Endothelial cell of umbilical vein (primary cell): ENCODE measurements at regions of chr2 and their contacts with region 1.

Region 1: DNA sequence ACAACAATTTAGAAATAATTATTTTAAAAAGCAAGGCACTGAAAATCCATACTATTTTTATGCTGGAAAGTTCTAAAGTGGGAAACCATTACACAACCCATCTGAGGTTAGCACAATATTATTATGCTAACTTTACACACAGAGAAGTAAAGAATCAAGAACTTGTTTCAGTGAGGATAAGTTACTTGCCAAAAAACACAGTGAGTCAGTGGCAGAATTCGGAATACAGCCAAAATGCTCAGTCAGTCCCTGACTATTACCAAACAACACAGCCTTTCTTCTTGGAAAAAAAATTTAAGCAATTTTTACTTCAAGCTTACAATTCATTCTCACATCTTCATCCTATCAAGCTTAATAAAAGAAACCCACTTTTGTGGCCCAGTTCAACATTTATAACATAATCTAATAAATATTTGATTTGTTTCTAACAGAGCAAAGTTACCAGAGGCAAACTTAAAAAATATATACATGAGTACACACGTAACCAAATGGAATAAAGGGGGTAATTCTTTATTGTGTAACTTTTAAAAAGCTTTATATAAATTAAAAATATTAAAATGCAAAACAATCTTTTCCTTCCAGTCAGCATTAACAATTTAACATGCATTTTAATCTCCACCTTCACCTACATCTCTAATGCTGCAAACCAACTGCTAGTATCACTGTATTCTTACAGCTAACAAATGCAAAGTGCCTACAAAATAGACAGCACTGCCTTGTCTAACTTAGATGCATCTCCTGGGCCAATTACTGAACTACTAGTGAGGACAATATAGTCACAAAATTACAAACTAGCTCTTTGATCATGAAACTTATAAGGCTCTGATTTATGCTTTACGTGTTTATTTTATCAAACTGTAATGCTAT is 55.2 kb downstream of the CCDC88A start:
- DNase-seq: peak; percentile 98
- H3K4me3 ChIP-seq: no peak overlapping the region
- H3K27ac ChIP-seq: no peak overlapping the region
- H3K4me1 ChIP-seq: peaks cover 24% of the 10 kb centered on the region
- H3K27me3 ChIP-seq: no peaks in the 10 kb centered on the region
- CTCF ChIP-seq: no peak
- POLR2A ChIP-seq: no peak

Region 2: GRCh38 chr2:55384786-55385185 is 20.4 kb after region 1 on chr2:
- CTCF ChIA-PET with region 1: interaction called, 5 read pairs
- POLR2A ChIA-PET with region 1: no interaction called
- dilution Hi-C with region 1: no loop called
- intact Hi-C with region 1: loop called (anchors 1 kb)
- DNase-seq: no peak
- H3K4me3 ChIP-seq: no peak overlapping the region
- H3K27ac ChIP-seq: no peak overlapping the region
- H3K4me1 ChIP-seq: no peaks in the 10 kb centered on the region
- H3K27me3 ChIP-seq: no peaks in the 10 kb centered on the region
- CTCF ChIP-seq: no peak
- POLR2A ChIP-seq: no peak

Region 3: DNA sequence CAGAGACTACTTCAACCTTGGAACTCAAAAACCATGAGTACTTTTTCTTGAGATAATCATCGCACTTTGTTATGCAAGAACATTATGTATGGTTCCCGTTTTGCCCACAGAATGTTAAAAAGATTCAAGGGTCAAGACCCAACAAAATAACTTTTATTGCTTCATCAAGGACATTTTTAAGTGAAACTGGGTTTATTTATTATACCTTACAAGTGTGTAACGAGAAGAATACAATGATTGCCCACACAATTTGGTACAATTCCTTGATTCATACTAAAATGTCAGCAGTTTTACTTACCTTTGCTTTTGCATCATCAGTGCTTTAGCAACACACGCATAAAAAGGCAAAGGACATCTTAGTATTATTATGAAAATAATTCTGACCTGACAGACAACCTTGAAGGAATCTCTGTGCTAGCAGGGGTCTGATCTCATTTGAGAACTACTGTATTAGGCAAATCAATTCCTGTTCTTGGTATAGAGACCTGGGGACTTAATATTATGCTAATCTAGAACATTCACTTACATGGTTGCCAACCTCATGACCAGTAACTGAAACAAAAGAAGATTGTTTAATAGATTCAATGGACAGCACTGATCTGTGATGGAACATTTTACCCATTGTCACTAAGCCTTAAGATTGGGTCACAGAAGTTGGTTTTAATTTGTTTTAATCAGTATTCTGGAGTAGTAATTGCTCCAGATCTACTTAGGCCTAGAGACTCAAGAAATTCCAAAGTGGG is 39.0 kb after region 1 on chr2:
- CTCF ChIA-PET with region 1: interaction called, 3 read pairs
- POLR2A ChIA-PET with region 1: no interaction called
- dilution Hi-C with region 1: no loop called
- intact Hi-C with region 1: loop called (anchors 5 kb)
- DNase-seq: no peak
- H3K4me3 ChIP-seq: no peak overlapping the region
- H3K27ac ChIP-seq: no peak overlapping the region
- H3K4me1 ChIP-seq: no peaks in the 10 kb centered on the region
- H3K27me3 ChIP-seq: no peaks in the 10 kb centered on the region
- CTCF ChIP-seq: no peak
- POLR2A ChIP-seq: no peak